Lower leg skin (tissue), 4 donors: ENCODE measurements at regions of chr15 and their contacts with region 1.

Region 1: GRCh38 chr15:36883713-36884517 is 216.4 kb downstream of the MEIS2 start:
- DNase-seq: peak; percentile 77 to 95
- H3K4me3 ChIP-seq: no peak overlapping the region
- CTCF ChIP-seq: peak in 1 of 3 donors; percentile 31
- POLR2A ChIP-seq: no peak

Region 2: DNA sequence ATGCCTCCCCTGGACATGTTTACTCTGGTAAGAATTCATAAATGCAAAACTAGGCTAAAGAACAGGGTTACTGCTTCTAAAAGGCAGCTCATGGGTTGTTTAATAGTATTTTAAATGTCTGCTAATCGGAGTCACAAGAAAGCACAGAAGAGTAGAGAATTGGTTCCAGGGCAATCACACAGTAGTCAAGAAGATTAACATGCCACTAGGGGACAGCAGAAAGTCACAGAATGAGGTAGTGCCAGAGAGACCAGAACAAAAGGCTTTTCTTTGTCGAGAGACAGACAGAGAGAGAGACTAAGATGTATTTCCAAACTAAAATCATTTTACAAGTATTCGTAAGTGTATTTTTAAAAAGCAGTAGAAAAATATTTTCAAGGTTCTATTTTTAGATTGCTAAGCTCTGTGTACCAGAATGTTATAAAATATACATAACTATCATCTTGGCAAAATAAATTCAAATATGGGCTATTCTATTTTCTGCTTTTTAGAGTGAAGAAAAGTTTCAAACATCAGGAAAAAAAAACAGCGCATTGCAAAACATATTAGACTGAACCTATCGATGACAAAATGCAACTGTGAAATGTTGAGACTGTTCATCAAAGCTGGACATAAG is 382.7 kb before region 1 on chr15:
- intact Hi-C with region 1: loop called (anchors 10 kb)
- DNase-seq: no peak
- H3K4me3 ChIP-seq: no peak overlapping the region
- CTCF ChIP-seq: no peak
- POLR2A ChIP-seq: no peak